A673 (cell line): ENCODE measurements at regions of chr19 and their contacts with region 1.

Region 1: GRCh38 chr19:11130824-11131455 is 24.6 kb downstream of the SPC24 start:
- DNase-seq: peak; percentile 77
- H3K4me3 ChIP-seq: no peak overlapping the region
- H3K27ac ChIP-seq: no peak overlapping the region
- H3K4me1 ChIP-seq: no peaks in the 10 kb centered on the region
- H3K27me3 ChIP-seq: no peaks in the 10 kb centered on the region
- CTCF ChIP-seq: peak; percentile 76

Region 2: GRCh38 chr19:10269333-10270179 is 861.4 kb before region 1 on chr19:
- CTCF ChIA-PET with region 1: no interaction called
- POLR2A ChIA-PET with region 1: no interaction called
- intact Hi-C with region 1: no loop called
- DNase-seq: peak; percentile 86
- H3K4me3 ChIP-seq: peak overlapping the region; percentile 32
- H3K27ac ChIP-seq: no peak overlapping the region
- H3K4me1 ChIP-seq: peaks cover 6% of the 10 kb centered on the region
- H3K27me3 ChIP-seq: no peaks in the 10 kb centered on the region
- CTCF ChIP-seq: peak; percentile 93

Region 3: GRCh38 chr19:11035441-11036377 is 95.2 kb before region 1 on chr19:
- CTCF ChIA-PET with region 1: interaction called, 3 read pairs
- POLR2A ChIA-PET with region 1: no interaction called
- intact Hi-C with region 1: loop called (anchors 2 kb)
- DNase-seq: peak; percentile 94
- H3K4me3 ChIP-seq: no peak overlapping the region
- H3K27ac ChIP-seq: no peak overlapping the region
- H3K4me1 ChIP-seq: no peaks in the 10 kb centered on the region
- H3K27me3 ChIP-seq: no peaks in the 10 kb centered on the region
- CTCF ChIP-seq: peak; percentile 94